Gastrocnemius medialis (tissue), 4 donors: ENCODE measurements at regions of chr13 and their contacts with region 1.

Region 1: DNA sequence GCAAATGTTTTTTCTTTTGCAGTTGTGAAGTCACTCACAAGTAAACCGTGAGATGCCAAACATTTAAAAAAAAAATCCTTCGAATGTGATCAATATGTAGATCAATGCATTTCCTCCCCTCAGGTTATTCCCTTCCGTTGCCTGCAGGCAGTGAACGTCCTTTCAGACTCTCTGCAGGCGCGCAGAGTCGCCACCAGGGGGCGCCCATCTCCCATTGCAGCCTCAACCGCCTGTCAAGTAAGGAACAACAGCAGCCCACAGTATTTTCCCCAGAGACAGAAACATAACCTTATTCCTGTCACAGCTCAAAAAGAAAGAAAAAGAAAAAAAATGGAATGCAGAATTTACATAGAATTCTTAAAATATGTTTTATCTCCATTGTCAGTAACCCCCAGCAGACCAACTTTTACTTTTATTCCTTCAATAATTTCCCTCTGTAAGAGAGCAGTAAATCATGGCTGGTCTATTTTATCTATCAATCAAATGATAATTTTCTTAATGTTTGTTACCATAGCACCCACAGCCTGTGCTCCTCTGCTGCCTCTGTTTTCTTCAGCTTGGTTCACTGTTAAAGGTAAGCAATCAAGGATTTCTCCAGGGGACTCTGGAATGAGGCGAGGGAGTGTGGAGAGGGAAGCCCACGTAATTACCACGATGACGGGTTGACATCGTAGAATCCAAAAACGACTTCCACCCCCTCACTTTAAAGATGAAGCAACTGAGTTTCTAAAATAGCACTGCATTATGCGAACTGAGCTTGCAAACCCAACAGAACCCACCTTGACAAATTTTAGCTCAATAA is 637.6 kb upstream of the ARGLU1 start:
- DNase-seq: peak in 1 of 2 donors; percentile 14
- ATAC-seq: peak in 1 of 2 donors; percentile 55
- H3K4me3 ChIP-seq: no peak overlapping the region
- H3K27ac ChIP-seq: peak overlapping the region in 1 of 4 donors; percentile 7
- H3K4me1 ChIP-seq: peaks cover 0 to 7% of the 10 kb centered on the region in 2 donors
- H3K27me3 ChIP-seq: no peaks in the 10 kb centered on the region
- CTCF ChIP-seq: peak; percentile 57 to 90 (median 64)
- POLR2A ChIP-seq: no peak

Region 2: GRCh38 chr13:108155185-108156106 is 949.9 kb after region 1 on chr13:
- in situ Hi-C with region 1: loop called (anchors 5 to 25 kb)
- intact Hi-C with region 1: loop called (anchors 5 kb)
- DNase-seq: no peak
- ATAC-seq: no peak
- H3K4me3 ChIP-seq: no peak overlapping the region
- H3K27ac ChIP-seq: no peak overlapping the region
- H3K4me1 ChIP-seq: no peaks in the 10 kb centered on the region
- H3K27me3 ChIP-seq: no peaks in the 10 kb centered on the region
- CTCF ChIP-seq: peak; percentile 30 to 78 (median 52)
- POLR2A ChIP-seq: no peak